Activated CD4-positive, alpha-beta T cell treated with anti-CD3 and anti-CD28 coated beads for 36 hours (primary cell): ENCODE measurements at regions of chr11 and their contacts with region 1.

Region 1: DNA sequence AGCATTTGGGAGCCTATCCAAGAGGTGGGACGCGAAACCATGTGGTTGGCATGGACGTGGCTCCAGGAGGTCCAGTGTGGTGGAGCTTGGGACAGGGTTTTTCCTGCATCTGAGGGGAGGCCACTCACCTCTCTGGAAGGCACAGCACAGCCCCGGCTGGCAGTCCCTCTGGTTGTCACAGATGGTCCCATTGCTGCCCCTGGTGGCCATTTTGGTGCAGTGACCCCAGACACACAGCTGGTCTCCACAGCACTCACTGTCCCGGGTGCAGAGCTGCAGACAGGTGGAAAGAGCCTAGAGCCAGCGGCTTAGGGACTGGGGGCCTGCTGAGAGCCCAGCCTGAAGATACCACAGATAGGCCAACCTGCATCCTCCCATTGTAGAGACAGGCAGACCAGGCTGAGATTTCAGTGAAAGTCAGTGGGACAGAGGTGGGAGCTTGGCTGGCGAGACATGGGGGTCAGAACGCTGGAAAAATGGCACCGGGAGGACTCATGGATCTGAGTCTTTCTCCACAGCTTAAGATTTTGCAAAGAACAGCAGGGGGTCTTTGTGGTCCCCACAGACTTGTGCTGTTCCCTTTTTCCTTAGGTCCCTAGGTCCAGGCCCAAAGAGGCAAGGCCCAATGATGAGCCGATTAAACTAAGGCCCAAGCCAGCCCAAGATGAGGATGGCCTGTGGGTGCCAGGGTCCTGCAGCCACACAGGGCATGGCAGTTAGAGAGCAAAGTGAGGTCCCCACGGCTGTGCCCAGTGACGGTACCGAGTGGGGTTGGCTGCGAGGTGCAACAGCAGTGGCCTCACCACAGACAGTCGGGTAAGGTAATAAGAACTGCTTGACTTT is 41.4 kb downstream of the DKK3 start:
- DNase-seq: peak; percentile 86
- ATAC-seq: peak; percentile 98
- H3K4me3 Mint-ChIP-seq: no peak overlapping the region
- H3K27ac Mint-ChIP-seq: no peak overlapping the region
- H3K4me1 Mint-ChIP-seq: peaks cover 4% of the 10 kb centered on the region
- H3K27me3 Mint-ChIP-seq: peaks cover 2% of the 10 kb centered on the region

Region 2: DNA sequence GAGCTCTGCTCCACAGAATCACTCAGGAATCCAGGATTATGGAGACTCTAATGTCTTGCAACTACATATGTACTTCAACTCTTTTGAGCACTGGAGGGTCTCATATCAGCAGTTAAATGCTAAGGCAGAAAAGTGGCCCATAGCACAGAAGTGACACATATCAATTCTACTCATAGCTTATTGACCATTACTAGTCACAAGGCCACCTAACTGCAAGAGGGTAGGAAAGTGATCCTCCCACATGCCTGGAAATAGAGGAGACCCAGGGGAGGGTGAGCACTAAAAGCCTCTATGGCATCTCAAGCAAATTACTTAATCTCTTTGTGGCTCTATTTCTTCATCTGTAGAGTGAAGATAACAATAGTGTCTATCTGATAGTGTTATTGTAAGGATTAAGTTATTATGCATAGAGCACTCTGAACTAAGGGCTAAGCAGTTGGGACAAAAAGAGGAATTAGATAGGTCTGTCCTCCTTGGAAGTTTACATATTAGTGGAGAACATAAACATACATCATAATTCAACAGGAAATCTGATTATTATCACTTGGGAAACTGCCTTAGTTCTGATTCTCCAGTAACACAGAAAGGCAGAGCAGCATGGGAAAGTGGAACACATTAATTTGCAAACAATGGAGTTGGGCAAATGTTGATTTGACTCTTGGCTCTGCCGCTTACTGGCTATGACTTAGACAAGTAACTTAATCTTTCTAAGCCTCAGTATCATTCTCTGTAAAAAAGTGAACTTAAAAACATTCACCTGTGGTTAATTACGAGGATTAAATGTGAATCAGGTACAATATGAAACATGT is 150.3 kb before region 1 on chr11:
- CTCF ChIA-PET with region 1: no interaction called
- POLR2A ChIA-PET with region 1: no interaction called
- intact Hi-C with region 1: no loop called
- DNase-seq: no peak
- ATAC-seq: no peak
- H3K4me3 Mint-ChIP-seq: no peak overlapping the region
- H3K27ac Mint-ChIP-seq: no peak overlapping the region
- H3K4me1 Mint-ChIP-seq: no peaks in the 10 kb centered on the region
- H3K27me3 Mint-ChIP-seq: peaks cover 2% of the 10 kb centered on the region

Region 3: GRCh38 chr11:11946180-11946579 is 20.9 kb before region 1 on chr11:
- CTCF ChIA-PET with region 1: interaction called, 13 read pairs
- POLR2A ChIA-PET with region 1: no interaction called
- intact Hi-C with region 1: no loop called
- DNase-seq: no peak
- ATAC-seq: no peak
- H3K4me3 Mint-ChIP-seq: no peak overlapping the region
- H3K27ac Mint-ChIP-seq: no peak overlapping the region
- H3K4me1 Mint-ChIP-seq: no peaks in the 10 kb centered on the region
- H3K27me3 Mint-ChIP-seq: no peaks in the 10 kb centered on the region

Region 4: DNA sequence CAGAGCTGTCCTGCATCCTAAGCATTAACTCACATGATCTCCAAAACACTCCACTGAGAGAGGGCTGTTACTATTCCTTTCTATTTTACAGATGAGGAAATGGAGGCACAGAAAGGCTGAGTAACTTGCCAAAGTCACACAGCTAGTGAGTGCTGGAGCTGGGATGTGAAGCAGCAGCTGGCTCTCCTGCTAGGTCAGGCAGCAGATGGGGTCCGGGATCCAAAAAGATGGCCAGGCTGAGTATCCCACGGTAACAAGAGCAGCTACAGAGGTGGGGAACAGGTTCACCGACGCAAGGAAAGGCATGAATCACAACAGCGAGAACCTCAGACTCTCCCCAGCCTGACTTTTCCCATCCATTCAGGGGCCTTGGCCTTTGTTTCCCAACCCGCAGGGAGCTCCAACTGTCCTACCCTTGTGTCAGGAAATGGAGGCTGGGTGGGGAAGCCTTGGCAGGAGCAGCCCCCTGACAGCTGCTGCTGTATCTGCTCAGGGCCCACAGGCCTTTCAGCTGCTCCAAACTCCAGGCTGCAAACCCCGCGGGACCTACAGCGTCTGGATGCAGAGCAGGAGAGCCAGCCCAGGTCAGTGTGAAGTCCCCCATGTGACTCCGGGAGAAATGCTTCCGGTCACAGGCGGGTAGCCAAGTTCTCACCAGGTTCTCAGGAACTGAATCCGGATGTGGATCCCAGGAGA is 11.9 kb after region 1 on chr11:
- CTCF ChIA-PET with region 1: interaction called, 11 read pairs
- POLR2A ChIA-PET with region 1: no interaction called
- intact Hi-C with region 1: no loop called
- DNase-seq: no peak
- ATAC-seq: no peak
- H3K4me3 Mint-ChIP-seq: no peak overlapping the region
- H3K27ac Mint-ChIP-seq: no peak overlapping the region
- H3K4me1 Mint-ChIP-seq: peaks cover 6% of the 10 kb centered on the region
- H3K27me3 Mint-ChIP-seq: no peaks in the 10 kb centered on the region